Caco-2 (cell line): ENCODE measurements at regions of chr6 and their contacts with region 1.

Region 1: DNA sequence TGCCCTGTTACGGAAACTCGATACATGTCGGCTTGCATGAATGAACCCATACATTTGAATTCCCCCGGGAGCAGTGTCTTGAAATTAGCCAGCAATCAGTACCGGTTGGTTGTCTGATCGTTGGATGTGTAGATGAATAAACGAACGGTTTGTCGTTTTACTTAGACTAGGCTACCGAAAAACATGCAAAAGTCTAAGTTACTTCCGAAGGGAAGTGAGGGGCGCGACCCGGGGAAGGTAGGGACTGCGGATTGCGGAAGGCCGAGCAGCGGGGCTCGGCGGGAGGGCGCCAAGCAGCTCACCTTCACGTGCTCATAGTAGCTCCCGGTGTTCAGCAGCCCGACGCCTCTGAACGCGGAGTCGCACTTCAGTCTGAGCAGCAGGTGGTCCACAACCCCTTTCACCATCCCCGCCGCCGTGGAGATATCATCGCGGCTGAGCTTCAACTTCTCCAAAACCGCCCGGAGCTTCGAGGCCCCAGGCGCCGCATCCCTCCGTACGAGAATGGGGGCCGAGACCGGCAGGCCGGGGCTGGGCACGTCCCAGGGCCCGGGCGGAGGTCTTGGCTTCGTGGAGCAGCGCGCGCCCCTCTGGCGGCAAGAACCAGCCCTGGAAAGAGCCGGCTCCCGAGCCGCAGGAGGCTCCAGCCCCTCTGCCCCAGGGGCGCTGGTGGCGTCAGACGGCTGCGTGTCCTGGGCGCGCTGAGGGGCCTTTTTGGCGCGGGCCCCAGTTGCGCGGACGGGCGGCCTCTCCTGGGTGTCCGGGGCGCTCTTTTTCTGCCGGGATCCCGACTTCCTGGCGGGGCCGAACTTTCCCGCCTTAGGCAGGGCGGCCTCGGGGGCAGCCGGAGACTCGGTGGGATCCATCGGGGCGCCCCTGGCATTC is 632 bp downstream of the CGAS start:
- DNase-seq: peak; percentile 56 to 71
- H3K4me3 ChIP-seq: peak overlapping the region; percentile 73
- H3K4me3 Mint-ChIP-seq: peak overlapping the region; percentile 80
- H3K27ac Mint-ChIP-seq: peak overlapping the region; percentile 52
- H3K4me1 ChIP-seq: peaks cover 3% of the 10 kb centered on the region; the same call in 1 of the 2 replicates
- H3K4me1 Mint-ChIP-seq: peaks cover 16% of the 10 kb centered on the region
- H3K27me3 ChIP-seq: no peaks in the 10 kb centered on the region
- H3K27me3 Mint-ChIP-seq: no peaks in the 10 kb centered on the region
- CTCF ChIP-seq: no peak

Region 2: GRCh38 chr6:73461537-73462350 is 10.3 kb after region 1 on chr6 and contains the start of gene MTO1:
- CTCF ChIA-PET with region 1: interaction called, 10 read pairs
- POLR2A ChIA-PET with region 1: interaction called, 20 read pairs
- intact Hi-C with region 1: no loop called
- DNase-seq: peak; percentile 83 to 87
- H3K4me3 ChIP-seq: peak within 1 kb of the TSS; percentile 81
- H3K4me3 Mint-ChIP-seq: peak within 1 kb of the TSS; percentile 96
- H3K27ac Mint-ChIP-seq: peak within 1 kb of the TSS; percentile 97
- H3K4me1 ChIP-seq: no peaks in the 10 kb centered on the region
- H3K4me1 Mint-ChIP-seq: no peaks in the 10 kb centered on the region
- H3K27me3 ChIP-seq: no peaks in the 10 kb centered on the region
- H3K27me3 Mint-ChIP-seq: no peaks in the 10 kb centered on the region
- CTCF ChIP-seq: no peak
- total RNA-seq, gene MTO1: 28.7 and 33.1 TPM in 2 replicates

Region 3: GRCh38 chr6:73653571-73654424 is 202.3 kb after region 1 on chr6 and contains the start of gene SLC17A5:
- CTCF ChIA-PET with region 1: no interaction called
- POLR2A ChIA-PET with region 1: interaction called, 4 read pairs
- intact Hi-C with region 1: loop called (anchors 5 kb)
- DNase-seq: peak; percentile 94
- H3K4me3 ChIP-seq: peak within 1 kb of the TSS; percentile 85
- H3K4me3 Mint-ChIP-seq: peak within 1 kb of the TSS; percentile 87
- H3K27ac Mint-ChIP-seq: peak within 1 kb of the TSS; percentile 96
- H3K4me1 ChIP-seq: peaks cover 25% of the 10 kb centered on the region
- H3K4me1 Mint-ChIP-seq: peaks cover 12% of the 10 kb centered on the region
- H3K27me3 ChIP-seq: no peaks in the 10 kb centered on the region
- H3K27me3 Mint-ChIP-seq: no peaks in the 10 kb centered on the region
- CTCF ChIP-seq: no peak
- total RNA-seq, gene SLC17A5: 13.0 TPM in 2 replicates